Body of pancreas (tissue), 4 donors: ENCODE measurements at regions of chr5 and their contacts with region 1.

Region 1: GRCh38 chr5:136249678-136250266 is 56.8 kb upstream of the SMIM32 start:
- DNase-seq: peak; percentile 61 to 79 (median 69)
- ATAC-seq: peak; percentile 72
- H3K4me3 ChIP-seq: no peak overlapping the region
- H3K27ac ChIP-seq: no peak overlapping the region
- H3K4me1 ChIP-seq: no peaks in the 10 kb centered on the region
- H3K27me3 ChIP-seq: no peaks in the 10 kb centered on the region
- CTCF ChIP-seq: peak; percentile 63 to 79 (median 76)
- POLR2A ChIP-seq: no peak

Region 2: GRCh38 chr5:136424835-136425584 is 175.2 kb after region 1 on chr5:
- intact Hi-C with region 1: loop called (anchors 10 kb)
- DNase-seq: peak; percentile 71 to 85 (median 76)
- ATAC-seq: peak; percentile 59
- H3K4me3 ChIP-seq: no peak overlapping the region
- H3K27ac ChIP-seq: no peak overlapping the region
- H3K4me1 ChIP-seq: no peaks in the 10 kb centered on the region
- H3K27me3 ChIP-seq: no peaks in the 10 kb centered on the region
- CTCF ChIP-seq: peak; percentile 43 to 75 (median 62)
- POLR2A ChIP-seq: no peak

Region 3: DNA sequence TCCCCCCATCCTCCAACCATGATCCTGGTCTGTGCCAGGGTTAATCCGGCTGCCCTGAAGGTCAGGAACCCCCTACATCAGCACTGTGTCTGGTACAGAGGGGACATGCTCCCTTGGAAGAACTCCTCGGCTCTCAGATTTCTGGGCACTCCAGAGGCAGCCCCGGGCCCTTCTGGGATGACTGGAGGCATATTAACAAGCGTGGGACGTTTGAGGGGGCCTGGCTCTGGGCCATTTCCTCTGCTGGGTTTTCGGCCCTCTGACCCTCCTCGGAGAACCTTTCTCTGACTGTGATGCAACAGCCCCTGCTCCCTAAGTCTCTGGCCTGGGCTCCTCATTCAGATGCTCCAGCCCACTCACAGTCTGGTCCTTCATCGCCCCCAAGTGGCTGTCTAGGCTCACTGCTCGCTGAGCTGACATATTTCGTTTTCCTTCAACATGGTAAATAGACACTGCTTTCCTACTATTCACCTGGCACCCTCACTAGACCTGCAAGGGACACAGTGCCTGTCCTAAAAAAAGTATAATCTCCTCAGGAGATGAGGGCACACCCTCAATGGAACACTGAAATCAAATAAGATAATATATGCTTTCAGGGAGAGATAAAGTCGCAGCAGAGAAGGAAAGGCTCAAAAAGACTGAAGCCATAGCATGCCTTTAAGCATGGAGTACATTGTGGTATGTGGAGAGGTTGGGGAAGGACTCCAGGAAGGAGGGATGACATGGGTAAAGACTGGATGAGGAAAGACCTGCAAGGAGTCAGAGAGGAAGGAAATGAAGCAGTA is 520.3 kb after region 1 on chr5:
- intact Hi-C with region 1: loop called (anchors 5 kb)
- DNase-seq: peak; percentile 68 to 75 (median 70)
- ATAC-seq: peak; percentile 68
- H3K4me3 ChIP-seq: no peak overlapping the region
- H3K27ac ChIP-seq: no peak overlapping the region
- H3K4me1 ChIP-seq: no peaks in the 10 kb centered on the region
- H3K27me3 ChIP-seq: no peaks in the 10 kb centered on the region
- CTCF ChIP-seq: peak; percentile 63 to 90 (median 80)
- POLR2A ChIP-seq: no peak